ENCODE measurements at regions of chr1 and their contacts with region 1.

Region 1: GRCh38 chr1:114581335-114582287 is at the start of gene BCAS2:
- DNase-seq: peak; percentile 90 to 99 (median 95)
- ATAC-seq: peak; percentile 95
- H3K4me3 ChIP-seq: peak within 1 kb of the TSS; percentile 56 to 72
- H3K4me3 Mint-ChIP-seq: peak within 1 kb of the TSS; percentile 96
- H3K27ac ChIP-seq: peak within 1 kb of the TSS; percentile 84 to 94
- H3K27ac Mint-ChIP-seq: peak within 1 kb of the TSS; percentile 99
- H3K4me1 ChIP-seq: peaks cover 22% of the 10 kb centered on the region
- H3K4me1 Mint-ChIP-seq: peaks cover 46% of the 10 kb centered on the region
- H3K27me3 ChIP-seq: no peaks in the 10 kb centered on the region
- H3K27me3 Mint-ChIP-seq: no peaks in the 10 kb centered on the region
- CTCF ChIP-seq: no peak
- total RNA-seq, gene BCAS2: 113 to 125 TPM

Region 2: DNA sequence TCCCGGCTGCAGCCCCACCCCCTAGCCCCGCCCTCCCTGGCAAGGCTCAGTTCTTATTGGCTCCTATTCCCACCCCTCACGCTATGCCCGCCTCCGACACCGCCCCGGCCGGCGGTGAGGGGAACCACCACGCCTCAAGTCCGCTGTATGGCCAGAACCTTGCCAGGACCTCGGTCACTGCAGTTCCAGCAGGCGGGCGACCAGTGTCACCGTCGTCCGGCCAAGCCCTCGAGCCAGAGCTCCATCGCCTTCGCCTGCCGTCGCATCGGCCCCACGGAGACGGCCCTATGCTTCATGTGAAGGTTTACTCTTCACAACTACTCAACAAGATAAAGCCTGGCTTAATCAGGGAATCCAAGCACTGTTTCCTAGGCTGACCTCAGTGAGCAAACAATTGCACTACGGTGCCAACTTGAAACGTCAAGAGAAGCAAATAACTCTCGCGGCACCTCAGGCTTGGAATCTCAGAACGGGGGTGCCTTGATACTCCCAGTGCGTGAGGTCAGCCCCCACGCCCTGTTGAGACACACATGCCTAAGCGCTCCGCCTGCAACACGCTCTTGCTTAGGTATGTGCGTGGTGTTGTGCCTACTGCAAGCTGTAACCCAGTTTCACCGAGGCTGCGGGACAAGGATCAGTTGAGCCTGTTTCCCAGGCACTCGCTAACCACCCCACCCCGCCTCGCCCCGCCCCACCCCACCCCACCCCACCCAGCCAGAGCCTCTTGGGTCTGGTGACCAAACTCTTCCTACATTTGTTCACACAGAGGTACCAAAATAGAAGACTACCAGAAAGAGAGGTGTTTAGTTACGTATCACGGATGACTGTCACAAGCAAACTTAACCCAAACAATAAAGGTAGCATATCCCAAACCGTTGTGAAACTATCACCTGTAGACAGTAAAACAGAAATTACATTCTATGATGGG is 88.7 kb after region 1 on chr1:
- CTCF ChIA-PET with region 1: no interaction called
- POLR2A ChIA-PET with region 1: interaction called, 4 read pairs
- intact Hi-C with region 1: loop called (anchors 1 kb)
- DNase-seq: peak in 8 of 9 experiments; percentile 2 to 90 (median 86)
- ATAC-seq: peak; percentile 96
- H3K4me3 ChIP-seq: peak overlapping the region; percentile 77 to 79
- H3K4me3 Mint-ChIP-seq: peak overlapping the region; percentile 98
- H3K27ac ChIP-seq: peak overlapping the region in 1 of 2 experiments; percentile 49
- H3K27ac Mint-ChIP-seq: peak overlapping the region; percentile 92
- H3K4me1 ChIP-seq: peaks cover 5% of the 10 kb centered on the region
- H3K4me1 Mint-ChIP-seq: peaks cover 14% of the 10 kb centered on the region
- H3K27me3 ChIP-seq: no peaks in the 10 kb centered on the region
- H3K27me3 Mint-ChIP-seq: peaks cover 11% of the 10 kb centered on the region
- CTCF ChIP-seq: no peak

Region 3: DNA sequence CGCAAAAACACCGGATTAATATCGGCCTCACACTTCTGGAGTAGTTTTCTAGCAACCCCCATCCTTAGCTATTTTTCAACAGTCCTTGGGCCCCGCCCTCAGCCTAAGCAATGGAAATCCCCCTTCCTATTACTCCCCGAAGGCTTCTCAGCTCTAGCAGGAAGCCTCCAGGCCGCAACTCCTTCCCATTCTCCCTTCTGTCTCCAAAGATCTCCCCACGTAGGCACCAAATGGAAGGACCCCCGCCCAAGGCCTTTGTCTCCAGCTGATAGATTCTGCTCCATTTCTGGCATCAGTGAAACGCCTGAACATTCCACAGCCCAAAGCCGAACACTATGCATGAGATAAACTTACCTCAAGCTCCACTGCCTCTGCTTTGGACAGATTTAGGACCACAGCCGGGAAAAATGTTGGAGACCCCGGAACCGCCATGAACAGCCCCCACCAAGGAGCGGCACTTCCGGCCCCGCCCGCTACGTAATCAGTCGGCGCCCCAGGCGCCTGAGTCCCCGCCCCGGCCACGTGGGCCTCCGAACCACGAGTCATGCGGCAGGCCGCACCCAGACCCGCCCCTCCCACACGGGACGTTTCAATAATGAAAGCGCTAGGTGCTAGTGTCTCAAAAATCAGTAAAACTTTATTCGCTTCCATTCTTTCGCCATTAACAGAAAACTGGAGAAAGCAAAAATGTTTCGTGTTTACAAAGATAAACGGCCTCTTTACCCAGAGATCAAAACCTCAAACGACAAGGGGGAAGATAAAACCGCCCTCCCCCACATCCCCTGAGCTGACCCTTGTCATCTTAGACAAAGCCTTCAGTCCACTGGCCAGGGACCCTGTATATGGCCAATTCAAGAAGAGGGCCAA is 134.9 kb after region 1 on chr1 and contains the start of gene NRAS:
- CTCF ChIA-PET with region 1: no interaction called
- POLR2A ChIA-PET with region 1: interaction called, 3 read pairs
- intact Hi-C with region 1: loop called (anchors 1 kb)
- DNase-seq: peak; percentile 91 to 97 (median 97)
- ATAC-seq: peak; percentile 94
- H3K4me3 ChIP-seq: peak within 1 kb of the TSS; percentile 84 to 87
- H3K4me3 Mint-ChIP-seq: peak within 1 kb of the TSS; percentile 97
- H3K27ac ChIP-seq: peak within 1 kb of the TSS; percentile 94 to 99
- H3K27ac Mint-ChIP-seq: peak within 1 kb of the TSS; percentile 100
- H3K4me1 ChIP-seq: peaks cover 16% of the 10 kb centered on the region
- H3K4me1 Mint-ChIP-seq: peaks cover 34% of the 10 kb centered on the region
- H3K27me3 ChIP-seq: no peaks in the 10 kb centered on the region
- H3K27me3 Mint-ChIP-seq: no peaks in the 10 kb centered on the region
- CTCF ChIP-seq: no peak
- total RNA-seq, gene NRAS: 46.0 to 46.4 TPM

Region 4: DNA sequence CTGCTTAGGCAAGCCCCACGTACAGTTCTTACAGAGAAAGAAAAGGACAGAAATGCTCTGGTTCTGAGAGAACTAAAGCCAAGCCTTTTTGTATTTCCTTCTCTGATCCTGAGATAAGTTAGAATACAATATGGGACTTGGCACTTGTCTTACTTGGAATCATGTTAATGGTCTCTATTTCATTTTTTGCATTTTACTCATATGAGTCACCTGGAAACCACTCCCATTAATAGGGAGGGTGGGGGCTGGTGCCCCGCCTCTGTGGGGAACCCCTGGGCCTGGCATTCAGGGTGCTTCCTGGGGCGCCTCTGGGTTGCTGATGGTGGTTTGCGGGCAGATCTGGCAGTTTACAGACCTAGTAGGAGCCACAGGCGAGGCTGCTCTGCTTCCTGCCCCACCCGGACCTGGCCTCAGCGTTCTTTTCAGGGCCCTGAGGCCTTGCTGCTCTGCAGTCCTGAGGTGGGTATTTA is 481.0 kb after region 1 on chr1:
- CTCF ChIA-PET with region 1: no interaction called
- POLR2A ChIA-PET with region 1: no interaction called
- intact Hi-C with region 1: loop called in 1 of 2 experiments (anchors 10 kb)
- DNase-seq: peak; percentile 91 to 99 (median 94)
- ATAC-seq: peak; percentile 89
- H3K4me3 ChIP-seq: peak overlapping the region in 1 of 2 experiments; percentile 17
- H3K4me3 Mint-ChIP-seq: peak overlapping the region; percentile 79
- H3K27ac ChIP-seq: peak overlapping the region; percentile 74 to 93
- H3K27ac Mint-ChIP-seq: peak overlapping the region; percentile 100
- H3K4me1 ChIP-seq: peaks cover 35% of the 10 kb centered on the region
- H3K4me1 Mint-ChIP-seq: peaks cover 43% of the 10 kb centered on the region
- H3K27me3 ChIP-seq: no peaks in the 10 kb centered on the region
- H3K27me3 Mint-ChIP-seq: no peaks in the 10 kb centered on the region
- CTCF ChIP-seq: no peak

Region 5: GRCh38 chr1:115098979-115099692 is 517.5 kb after region 1 on chr1:
- CTCF ChIA-PET with region 1: no interaction called
- POLR2A ChIA-PET with region 1: no interaction called
- intact Hi-C with region 1: loop called in 1 of 2 experiments (anchors 10 kb)
- DNase-seq: peak; percentile 55 to 96 (median 74)
- ATAC-seq: peak; percentile 89
- H3K4me3 ChIP-seq: peak overlapping the region; percentile 51 to 56
- H3K4me3 Mint-ChIP-seq: peak overlapping the region; percentile 86
- H3K27ac ChIP-seq: peak overlapping the region; percentile 95
- H3K27ac Mint-ChIP-seq: peak overlapping the region; percentile 97
- H3K4me1 ChIP-seq: peaks cover 27% of the 10 kb centered on the region
- H3K4me1 Mint-ChIP-seq: peaks cover 36% of the 10 kb centered on the region
- H3K27me3 ChIP-seq: no peaks in the 10 kb centered on the region
- H3K27me3 Mint-ChIP-seq: no peaks in the 10 kb centered on the region
- CTCF ChIP-seq: no peak